Activated T-helper 2 cell treated with anti-CD3 and anti-CD28 coated beads, Interferon-gamma antibody, Interleukin-2, Interleukin-4, amounts not matched to agents 10 μg/mL and 5 μg/mL and 100 μg/mL, durations not matched to agents 14 hours and 24 hours and 36 hours (primary cell): ENCODE measurements at regions of chr2 and their contacts with region 1.

Region 1: GRCh38 chr2:169584005-169584877 is at the start of gene PPIG:
- DNase-seq: peak; percentile 79
- H3K4me3 Mint-ChIP-seq: peak within 1 kb of the TSS; percentile 98
- H3K27ac Mint-ChIP-seq: peak within 1 kb of the TSS; percentile 99
- H3K4me1 Mint-ChIP-seq: peaks cover 19% of the 10 kb centered on the region
- H3K27me3 Mint-ChIP-seq: peaks cover 2% of the 10 kb centered on the region
- total RNA-seq, gene PPIG: 57.5 and 57.6 TPM in 2 replicates

Region 2: GRCh38 chr2:169573160-169573973 is 10.9 kb before region 1 on chr2 and contains the start of gene FASTKD1:
- intact Hi-C with region 1: loop called (anchors 1 kb)
- DNase-seq: peak; percentile 81
- H3K4me3 Mint-ChIP-seq: peak within 1 kb of the TSS; percentile 97
- H3K27ac Mint-ChIP-seq: peak within 1 kb of the TSS; percentile 91
- H3K4me1 Mint-ChIP-seq: peaks cover 18% of the 10 kb centered on the region
- H3K27me3 Mint-ChIP-seq: no peaks in the 10 kb centered on the region
- total RNA-seq, gene FASTKD1: 61.5 and 61.9 TPM in 2 replicates

Region 3: DNA sequence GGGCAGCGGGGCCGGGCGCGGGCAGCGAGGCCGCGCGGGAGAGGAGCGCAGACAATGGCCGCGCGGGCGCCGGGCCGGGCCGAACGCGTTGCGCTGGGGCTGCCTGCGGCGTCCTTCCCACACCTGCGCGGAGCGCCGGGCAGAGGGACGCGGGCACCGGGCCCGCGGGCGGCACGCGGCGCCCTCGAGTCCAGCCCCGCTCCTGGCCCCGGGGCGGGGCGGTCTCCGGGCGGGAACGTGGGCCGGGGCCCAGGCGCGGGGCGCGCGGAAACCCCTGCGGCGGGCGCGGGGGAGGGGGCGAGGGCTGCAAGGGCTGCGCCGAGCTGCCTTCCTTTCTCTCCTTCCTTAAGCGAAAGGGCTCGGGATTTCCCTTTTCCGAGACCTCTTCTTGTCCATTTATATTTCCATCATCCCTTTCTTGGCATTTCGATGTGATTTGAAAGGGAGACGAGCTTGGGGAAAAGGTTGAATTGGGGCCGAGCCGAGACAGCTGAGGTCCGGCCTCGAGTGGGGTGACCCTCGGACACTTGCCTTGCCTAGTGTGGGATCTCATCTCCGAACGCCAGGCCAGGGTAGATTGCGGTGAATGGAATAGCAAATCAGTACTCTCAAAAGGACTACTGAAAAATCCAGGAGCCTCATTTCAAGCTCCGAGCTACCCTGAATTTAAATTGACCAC is 150.1 kb after region 1 on chr2:
- intact Hi-C with region 1: loop called (anchors 5 kb)
- DNase-seq: no peak
- H3K4me3 Mint-ChIP-seq: peak overlapping the region; percentile 78
- H3K27ac Mint-ChIP-seq: no peak overlapping the region
- H3K4me1 Mint-ChIP-seq: peaks cover 20% of the 10 kb centered on the region
- H3K27me3 Mint-ChIP-seq: peaks cover 38% of the 10 kb centered on the region